ENCODE measurements at regions of chr14 and their contacts with region 1.

Region 1: GRCh38 chr14:91418387-91419043 is 895 bp upstream of the CCDC88C start:
- DNase-seq: peak; percentile 67 to 88 (median 74)
- H3K4me3 ChIP-seq: peak overlapping the region in 2 of 3 donors; percentile 56 to 60
- H3K27ac ChIP-seq: peak overlapping the region in 1 of 2 donors; percentile 51
- H3K4me1 ChIP-seq: peaks cover 6 to 22% (median 8%) of the 10 kb centered on the region in 3 donors
- H3K27me3 ChIP-seq: no peaks in the 10 kb centered on the region
- CTCF ChIP-seq: peak; percentile 94

Region 2: DNA sequence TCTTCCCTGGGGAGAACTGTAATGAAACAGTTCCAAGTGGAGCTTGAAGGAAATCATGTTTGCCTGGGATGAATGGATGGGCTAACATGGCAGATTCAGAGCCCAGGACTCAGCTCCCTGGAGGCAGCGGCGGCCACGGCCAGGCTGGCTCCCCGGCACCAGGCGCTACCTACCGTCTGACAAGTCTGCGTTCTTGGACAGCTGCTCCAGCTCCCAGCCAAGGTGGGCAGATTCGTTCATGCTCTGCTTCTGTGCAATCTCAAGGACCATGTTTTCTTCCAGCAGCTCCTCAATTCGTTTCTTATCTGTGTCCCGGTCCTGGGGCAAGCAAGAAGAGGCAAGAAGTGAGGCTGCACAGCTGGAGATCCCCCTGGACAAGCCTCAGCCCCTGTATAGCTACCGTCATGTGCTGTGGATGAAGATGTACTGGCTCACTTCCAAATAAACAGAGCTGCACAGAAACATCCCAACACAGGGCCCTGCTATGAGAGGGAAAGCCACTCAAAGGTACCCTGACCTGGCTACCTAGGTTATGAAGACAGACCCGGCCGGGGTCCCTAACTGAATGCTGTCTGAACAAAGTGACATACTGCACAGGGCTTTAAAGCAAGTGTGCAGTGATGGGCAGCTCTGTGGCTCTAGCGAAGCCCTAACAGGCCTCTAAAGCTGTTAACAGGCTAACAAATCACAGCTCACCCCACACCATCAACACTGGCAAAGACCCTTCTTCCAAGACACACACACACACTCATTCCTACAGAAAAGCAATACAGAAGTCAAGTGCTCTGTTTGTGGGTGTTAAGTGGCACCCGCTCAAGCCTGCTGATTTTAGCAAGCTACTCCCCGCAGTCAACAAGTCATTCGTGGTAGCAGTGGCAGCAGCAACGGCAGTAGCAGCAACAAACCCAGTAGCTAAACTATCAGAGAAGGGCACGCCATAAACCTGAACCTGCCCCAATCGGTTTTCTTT is 93.6 kb before region 1 on chr14:
- intact Hi-C with region 1: loop called (anchors 5 kb)
- DNase-seq: peak in 1 of 5 donors; percentile 61
- H3K4me3 ChIP-seq: peak overlapping the region in 1 of 3 donors; percentile 48
- H3K27ac ChIP-seq: peak overlapping the region; percentile 69 to 71
- H3K4me1 ChIP-seq: peaks cover 2 to 22% (median 3%) of the 10 kb centered on the region in 3 donors
- H3K27me3 ChIP-seq: no peaks in the 10 kb centered on the region
- CTCF ChIP-seq: no peak

Region 3: DNA sequence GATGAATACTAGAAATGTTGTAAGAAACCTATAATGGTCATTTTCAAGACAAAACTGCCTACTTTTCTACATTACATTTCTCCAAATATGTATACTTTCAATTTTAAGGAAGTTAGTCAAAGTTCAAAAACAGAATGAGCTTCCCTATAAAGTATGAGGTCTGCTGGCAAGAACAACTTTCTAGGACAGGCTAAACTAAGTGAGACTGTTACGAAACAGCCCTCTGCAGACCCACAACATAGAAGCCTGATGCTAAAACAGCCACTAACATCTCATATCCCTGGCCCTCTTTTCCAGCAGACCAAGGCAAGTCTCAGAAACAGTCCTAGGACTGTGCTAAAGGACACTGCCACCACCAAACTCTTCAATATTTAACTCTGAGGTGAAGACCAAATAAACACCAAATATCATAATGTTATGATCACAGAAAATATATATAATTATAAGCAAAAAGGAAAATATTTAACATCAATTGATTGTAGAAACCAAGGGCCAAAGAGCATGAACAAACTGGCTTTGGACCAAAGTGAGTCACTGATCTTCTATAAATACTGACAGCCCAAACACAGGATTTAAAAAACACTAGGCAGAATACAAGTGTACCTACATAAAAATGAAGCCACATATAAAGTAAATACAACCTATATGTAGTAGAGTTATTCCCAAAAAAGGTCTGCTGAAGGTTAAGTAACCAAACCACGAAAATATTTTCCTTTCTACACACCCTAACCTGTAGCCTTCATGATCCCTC is 63.9 kb after region 1 on chr14:
- intact Hi-C with region 1: no loop called
- DNase-seq: no peak
- H3K4me3 ChIP-seq: no peak overlapping the region
- H3K27ac ChIP-seq: no peak overlapping the region
- H3K4me1 ChIP-seq: no peaks in the 10 kb centered on the region
- H3K27me3 ChIP-seq: no peaks in the 10 kb centered on the region
- CTCF ChIP-seq: no peak